AG04449 (cell line): ENCODE measurements at regions of chr1 and their contacts with region 1.

Region 1: GRCh38 chr1:230084138-230084880 is 17.3 kb downstream of the GALNT2 start:
- DNase-seq: peak; percentile 97
- H3K4me3 ChIP-seq: peak overlapping the region; percentile 34
- CTCF ChIP-seq: no peak

Region 2: DNA sequence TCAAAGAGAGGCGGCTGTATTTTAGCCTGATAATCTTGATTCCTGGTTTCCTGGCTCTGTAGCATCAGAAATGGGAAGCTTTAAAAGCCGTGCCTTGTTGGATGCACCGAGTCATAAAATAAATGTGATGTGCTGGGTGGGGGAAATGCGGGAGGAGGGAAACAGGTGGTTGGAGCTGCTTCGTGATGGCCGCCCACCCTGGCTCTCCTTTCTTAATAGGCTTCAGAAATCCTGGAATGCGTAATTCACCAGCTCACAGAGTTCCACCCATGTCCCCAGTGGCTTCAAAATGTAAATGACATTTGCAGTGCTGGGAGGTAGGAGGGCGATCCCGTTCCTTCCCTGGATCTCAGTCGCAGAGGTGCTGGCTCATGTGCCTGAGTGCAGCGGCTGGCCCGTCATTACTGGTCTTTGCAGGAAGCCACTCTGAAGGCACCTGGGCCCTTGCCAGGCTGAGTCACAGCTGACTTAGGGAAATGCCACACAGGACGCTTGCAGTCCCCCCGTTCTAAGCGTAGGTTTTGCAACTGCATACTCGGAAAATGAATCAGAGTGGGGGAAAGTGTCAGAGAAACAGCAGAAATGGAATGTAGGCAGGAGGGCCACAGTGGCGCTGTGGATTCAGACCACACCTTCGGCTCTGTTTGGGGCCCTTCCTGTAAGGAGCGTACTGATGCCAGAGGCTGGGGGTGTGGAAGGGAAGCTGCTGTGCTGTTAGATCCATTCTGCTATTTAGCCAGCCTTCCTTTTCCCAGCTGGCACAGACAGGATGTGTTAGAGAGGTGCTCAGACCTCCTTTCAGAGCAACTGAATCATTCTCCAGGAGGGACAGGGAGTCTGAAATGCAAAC is 20.3 kb after region 1 on chr1:
- CTCF ChIA-PET with region 1: interaction called, 21 read pairs
- POLR2A ChIA-PET with region 1: interaction called, 18 read pairs
- DNase-seq: peak; percentile 99
- H3K4me3 ChIP-seq: peak overlapping the region; percentile 29; the same call in 1 of the 2 replicates
- CTCF ChIP-seq: no peak